WTC11 (cell line): ENCODE measurements at regions of chr10 and their contacts with region 1.

Region 1: DNA sequence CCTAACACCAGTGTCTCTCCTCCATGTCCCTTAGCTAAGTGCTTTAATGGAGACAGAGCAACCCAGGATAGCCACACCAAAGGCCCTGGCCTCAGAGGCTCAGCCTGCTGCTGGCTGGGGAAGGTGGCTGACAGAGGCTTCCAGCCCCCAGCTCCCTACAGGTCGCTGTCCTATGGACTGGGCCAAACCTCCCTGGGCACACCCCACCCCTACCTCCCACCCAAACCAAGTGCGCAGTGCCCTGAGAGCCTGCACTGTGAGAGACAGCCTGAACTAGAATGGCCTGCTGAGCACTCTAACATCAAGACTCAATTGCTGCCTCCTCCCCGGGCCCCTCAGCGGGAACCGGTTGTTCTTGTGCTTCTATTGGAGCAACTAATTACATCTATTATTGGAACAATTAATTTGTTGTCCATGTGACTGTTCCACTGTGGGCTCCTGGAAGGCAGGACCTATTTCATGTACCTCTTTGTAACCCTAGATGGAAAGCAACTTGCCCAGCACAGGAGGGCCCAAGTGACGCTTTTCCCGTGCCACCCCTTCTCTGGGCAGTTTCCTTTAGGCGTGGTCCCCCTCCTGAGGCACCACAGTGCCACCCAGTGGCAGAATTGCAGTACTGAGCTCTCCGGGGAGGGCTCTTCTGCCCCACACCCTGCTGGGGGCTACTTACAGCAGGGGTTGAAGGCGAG is 63.6 kb upstream of the WAPL start:
- DNase-seq: peak; percentile 90
- ATAC-seq: peak; percentile 94
- H3K4me3 Mint-ChIP-seq: no peak overlapping the region
- H3K27ac Mint-ChIP-seq: no peak overlapping the region
- H3K4me1 Mint-ChIP-seq: peaks cover 3% of the 10 kb centered on the region; the same call in 1 of the 2 replicates
- H3K27me3 Mint-ChIP-seq: no peaks in the 10 kb centered on the region; the same call in 1 of the 2 replicates
- CTCF ChIP-seq: peak; percentile 87

Region 2: GRCh38 chr10:86411281-86411841 is 173.8 kb before region 1 on chr10:
- CTCF ChIA-PET with region 1: interaction called, 11 read pairs
- POLR2A ChIA-PET with region 1: no interaction called
- DNase-seq: no peak
- ATAC-seq: no peak
- H3K4me3 Mint-ChIP-seq: no peak overlapping the region
- H3K27ac Mint-ChIP-seq: no peak overlapping the region
- H3K4me1 Mint-ChIP-seq: peaks cover 8% of the 10 kb centered on the region
- H3K27me3 Mint-ChIP-seq: no peaks in the 10 kb centered on the region; the same call in 1 of the 2 replicates
- CTCF ChIP-seq: no peak

Region 3: DNA sequence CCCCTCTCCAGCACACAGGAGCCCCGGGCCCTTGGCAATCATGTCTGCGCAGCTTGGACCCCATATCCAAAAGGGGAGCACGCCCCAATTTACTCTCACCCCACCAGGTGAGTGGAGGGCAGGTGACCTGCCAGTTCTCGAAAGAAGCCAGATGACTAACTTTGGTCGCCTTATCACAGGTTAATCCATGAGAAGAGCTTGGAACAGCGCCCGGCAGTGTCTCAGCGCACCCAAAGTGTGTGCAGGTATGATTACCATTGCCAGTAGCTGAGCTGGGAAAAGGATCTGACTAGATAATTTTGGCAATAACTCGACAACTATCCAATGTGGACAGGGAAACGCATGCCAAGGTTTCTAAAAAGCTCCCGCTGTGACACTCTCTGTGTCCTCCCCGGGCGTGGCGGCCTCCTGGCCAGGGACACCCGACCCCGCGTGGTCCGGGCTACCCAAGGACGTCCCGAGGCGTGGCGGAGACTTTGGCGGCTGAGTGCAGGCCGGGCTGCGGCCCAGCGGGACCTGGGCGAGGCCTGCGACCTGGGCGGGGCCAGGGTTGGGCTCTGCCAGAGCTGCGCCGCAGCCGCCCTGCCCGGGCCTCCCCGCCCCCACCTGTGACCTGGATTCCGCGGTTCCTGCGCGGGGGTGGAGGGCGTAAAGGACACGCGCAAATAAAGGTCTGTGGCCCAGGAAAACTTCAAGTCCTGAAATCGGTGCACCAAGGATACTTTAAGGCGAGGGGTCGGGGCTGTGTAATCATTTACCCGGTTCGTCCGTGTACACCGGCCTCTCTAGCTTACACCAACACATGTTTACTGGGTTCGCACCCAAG is 49.9 kb before region 1 on chr10:
- CTCF ChIA-PET with region 1: interaction called, 19 read pairs
- POLR2A ChIA-PET with region 1: no interaction called
- DNase-seq: peak; percentile 75
- ATAC-seq: peak; percentile 87
- H3K4me3 Mint-ChIP-seq: peak overlapping the region; percentile 77
- H3K27ac Mint-ChIP-seq: no peak overlapping the region
- H3K4me1 Mint-ChIP-seq: peaks cover 22% of the 10 kb centered on the region
- H3K27me3 Mint-ChIP-seq: peaks cover 28% of the 10 kb centered on the region
- CTCF ChIP-seq: no peak

Region 4: DNA sequence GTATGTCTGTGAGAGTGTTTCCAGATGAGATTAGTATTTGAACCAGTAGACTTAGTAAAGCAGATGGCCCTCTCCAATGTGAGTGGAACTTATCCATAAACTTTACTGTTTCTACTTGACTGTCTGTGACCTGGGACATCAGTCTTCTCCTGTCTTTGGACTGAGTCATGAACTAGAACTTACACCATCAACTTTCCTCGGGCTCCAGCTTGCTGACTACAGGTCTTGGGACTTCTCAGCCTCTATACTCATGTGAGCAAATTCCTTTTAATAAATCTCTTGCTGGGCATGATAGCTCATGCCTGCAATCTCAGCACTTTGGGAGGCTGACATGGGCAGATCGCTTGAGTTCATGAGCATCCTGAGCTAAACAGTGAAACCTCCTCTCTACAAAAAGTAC is 37.9 kb before region 1 on chr10:
- CTCF ChIA-PET with region 1: no interaction called
- POLR2A ChIA-PET with region 1: no interaction called
- DNase-seq: no peak
- ATAC-seq: no peak
- H3K4me3 Mint-ChIP-seq: no peak overlapping the region
- H3K27ac Mint-ChIP-seq: no peak overlapping the region
- H3K4me1 Mint-ChIP-seq: no peaks in the 10 kb centered on the region
- H3K27me3 Mint-ChIP-seq: no peaks in the 10 kb centered on the region; the same call in none of the 2 replicates
- CTCF ChIP-seq: no peak

Region 5: GRCh38 chr10:86611386-86611785 is 26.2 kb after region 1 on chr10:
- CTCF ChIA-PET with region 1: interaction called, 13 read pairs
- POLR2A ChIA-PET with region 1: no interaction called
- DNase-seq: no peak
- ATAC-seq: peak; percentile 56
- H3K4me3 Mint-ChIP-seq: no peak overlapping the region
- H3K27ac Mint-ChIP-seq: no peak overlapping the region
- H3K4me1 Mint-ChIP-seq: no peaks in the 10 kb centered on the region
- H3K27me3 Mint-ChIP-seq: no peaks in the 10 kb centered on the region
- CTCF ChIP-seq: no peak

Region 6: DNA sequence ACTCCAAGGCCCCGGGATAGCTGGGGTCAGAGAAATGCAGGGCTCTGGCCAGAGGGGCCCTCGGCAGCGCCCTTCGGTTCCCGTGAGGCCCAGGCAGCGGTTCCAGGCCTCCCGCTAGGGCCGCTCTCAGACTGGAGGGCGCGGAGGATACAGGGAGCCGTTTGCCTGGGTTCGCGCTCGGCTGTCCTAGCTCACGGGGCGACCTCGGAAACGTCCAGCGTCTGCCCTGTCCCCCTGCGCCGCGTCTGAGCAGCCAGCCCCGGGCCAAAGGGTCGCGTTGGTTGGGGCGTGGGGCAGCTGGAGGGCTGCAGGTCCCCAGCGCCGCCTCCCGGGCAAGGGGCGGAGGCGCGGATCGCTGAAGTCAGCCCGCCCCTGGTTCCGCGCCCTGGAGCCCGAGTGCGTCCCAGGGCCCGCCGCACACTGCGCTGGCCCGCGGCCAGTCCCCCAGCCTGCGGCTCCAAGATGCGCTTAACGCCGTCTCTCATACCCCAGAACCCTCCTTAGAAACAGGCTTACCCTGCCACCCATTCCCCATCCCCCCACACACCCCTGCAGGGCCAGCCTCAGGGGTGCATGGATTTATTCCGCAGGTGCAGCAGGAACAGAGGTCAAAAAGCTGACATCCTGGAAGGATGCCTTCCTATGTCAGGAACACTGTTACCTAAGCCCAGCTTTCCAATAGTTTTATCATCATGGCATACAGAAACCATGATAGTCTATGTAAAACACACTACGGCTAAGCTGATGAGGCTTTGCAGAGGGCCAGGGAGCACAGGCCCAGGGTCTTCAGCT is 47.0 kb after region 1 on chr10:
- CTCF ChIA-PET with region 1: interaction called, 26 read pairs
- POLR2A ChIA-PET with region 1: no interaction called
- DNase-seq: peak; percentile 86
- ATAC-seq: peak; percentile 98
- H3K4me3 Mint-ChIP-seq: peak overlapping the region; percentile 70
- H3K27ac Mint-ChIP-seq: no peak overlapping the region
- H3K4me1 Mint-ChIP-seq: peaks cover 15% of the 10 kb centered on the region
- H3K27me3 Mint-ChIP-seq: peaks cover 27% of the 10 kb centered on the region
- CTCF ChIP-seq: no peak

Region 7: DNA sequence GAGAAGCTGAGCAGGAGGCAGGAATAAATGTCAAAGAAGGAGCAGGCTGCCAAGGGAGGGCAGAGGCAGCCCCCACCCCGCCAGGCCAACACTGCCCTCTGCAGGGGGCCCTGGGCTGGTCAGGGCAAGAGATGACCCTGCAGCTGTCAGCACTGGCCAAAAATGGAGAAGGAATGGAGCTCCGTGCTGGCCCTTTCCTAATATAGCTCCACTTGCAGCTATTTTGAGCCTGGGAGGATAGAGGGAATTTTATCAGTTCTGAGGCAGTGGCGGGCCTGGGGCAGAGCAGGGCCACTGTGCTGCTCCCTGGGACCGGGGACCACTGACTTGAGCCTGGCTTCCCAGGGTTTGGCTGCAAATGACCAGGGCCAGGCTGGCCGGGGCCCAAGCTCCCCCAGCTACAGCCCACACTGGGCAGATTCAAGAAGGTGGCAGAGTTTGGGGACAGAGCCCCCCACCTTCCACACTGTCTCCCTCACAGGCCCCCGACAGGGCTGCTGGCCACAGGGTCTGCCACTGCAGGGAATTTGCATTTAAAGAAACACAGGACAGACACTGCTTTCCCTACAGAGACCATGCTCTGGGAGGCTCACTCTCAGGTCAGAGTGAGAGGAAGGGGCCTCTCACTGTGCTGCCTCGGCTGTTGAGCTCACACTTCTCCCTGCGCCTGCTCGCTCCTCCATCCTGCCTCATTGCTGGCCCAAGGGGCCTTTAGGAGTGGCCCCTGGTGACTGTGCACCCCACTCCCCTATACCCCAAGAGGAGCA is 99.3 kb after region 1 on chr10:
- CTCF ChIA-PET with region 1: interaction called, 11 read pairs
- POLR2A ChIA-PET with region 1: no interaction called
- DNase-seq: peak; percentile 59
- ATAC-seq: peak; percentile 32
- H3K4me3 Mint-ChIP-seq: no peak overlapping the region
- H3K27ac Mint-ChIP-seq: no peak overlapping the region
- H3K4me1 Mint-ChIP-seq: peaks cover 33% of the 10 kb centered on the region
- H3K27me3 Mint-ChIP-seq: no peaks in the 10 kb centered on the region
- CTCF ChIP-seq: no peak; the same call in 1 of the 2 replicates

Region 8: GRCh38 chr10:86730227-86730626 is 145.0 kb after region 1 on chr10:
- CTCF ChIA-PET with region 1: no interaction called
- POLR2A ChIA-PET with region 1: no interaction called
- DNase-seq: no peak
- ATAC-seq: no peak
- H3K4me3 Mint-ChIP-seq: no peak overlapping the region
- H3K27ac Mint-ChIP-seq: no peak overlapping the region
- H3K4me1 Mint-ChIP-seq: peaks cover 18% of the 10 kb centered on the region
- H3K27me3 Mint-ChIP-seq: no peaks in the 10 kb centered on the region
- CTCF ChIP-seq: no peak